ENCODE measurements at regions of chrX and their contacts with region 1.

Region 1: GRCh38 chrX:54182864-54183608 is at the start of gene FAM120C:
- DNase-seq: peak; percentile 12 to 85 (median 68)

Region 2: GRCh38 chrX:54044126-54044876 is 138.7 kb before region 1 on chrX and contains the start of gene PHF8:
- intact Hi-C with region 1: loop called (anchors 5 kb)
- DNase-seq: peak; percentile 78 to 96 (median 91)